BJ (cell line): ENCODE measurements at regions of chr1 and their contacts with region 1.

Region 1: GRCh38 chr1:206469933-206470691 is at the start of gene IKBKE:
- DNase-seq: no peak
- H3K4me3 ChIP-seq: peak within 1 kb of the TSS; percentile 94
- H3K27me3 ChIP-seq: no peaks in the 10 kb centered on the region
- CTCF ChIP-seq: peak; percentile 50
- polyA plus RNA-seq, gene IKBKE: 13.0 and 23.0 TPM in 2 replicates

Region 2: DNA sequence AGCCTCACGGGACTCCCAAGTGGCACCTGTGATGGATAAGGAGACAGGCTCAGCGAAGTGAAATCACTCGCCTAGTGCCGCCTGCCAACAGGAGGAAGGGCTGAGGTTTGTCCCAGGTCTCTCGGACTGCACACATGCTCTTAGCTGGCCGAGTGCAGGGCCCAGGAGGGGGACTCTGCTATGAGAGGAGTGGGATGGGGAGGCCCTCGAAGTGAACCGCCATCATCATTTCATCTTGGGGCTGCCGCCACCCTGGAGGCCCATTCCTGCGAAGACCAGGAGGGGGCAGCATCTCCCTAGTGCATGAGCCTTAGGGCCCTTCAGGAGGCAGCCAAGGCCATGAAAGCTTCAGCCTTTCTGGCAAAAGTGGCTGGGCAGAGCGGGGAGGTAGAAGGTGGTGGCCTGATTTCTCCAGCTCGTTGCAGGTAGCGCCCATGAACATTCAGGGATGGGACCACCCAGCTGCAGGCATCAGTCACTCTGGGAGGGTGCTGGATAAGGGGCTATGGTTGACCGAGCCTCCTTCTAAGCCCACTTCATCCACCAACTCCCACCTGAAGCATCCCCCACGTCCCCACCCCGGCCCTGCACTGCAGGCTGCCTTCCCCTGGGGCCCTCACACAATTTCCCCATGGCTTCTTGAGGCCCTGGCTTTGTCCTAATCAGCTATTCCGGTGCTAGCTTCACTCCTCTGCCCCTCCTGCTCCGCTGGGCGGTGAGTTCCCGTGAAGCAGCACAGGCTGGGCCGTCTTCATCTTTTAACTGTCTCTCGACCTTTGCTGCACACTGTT is 20.1 kb after region 1 on chr1:
- CTCF ChIA-PET with region 1: interaction called, 12 read pairs
- POLR2A ChIA-PET with region 1: no interaction called
- DNase-seq: no peak
- H3K4me3 ChIP-seq: no peak overlapping the region
- H3K27me3 ChIP-seq: no peaks in the 10 kb centered on the region; the same call in 1 of the 2 replicates
- CTCF ChIP-seq: peak; percentile 98

Region 3: GRCh38 chr1:206503591-206504362 is 33.7 kb after region 1 on chr1:
- CTCF ChIA-PET with region 1: interaction called, 3 read pairs
- POLR2A ChIA-PET with region 1: interaction called, 11 read pairs
- DNase-seq: peak; percentile 88
- H3K4me3 ChIP-seq: no peak overlapping the region
- H3K27me3 ChIP-seq: 0 out of 2 replicates have a peak, but pooled peaks cover 3% of the 10 kb centered on the region
- CTCF ChIP-seq: no peak